Mammary epithelial cell (primary cell): ENCODE measurements at regions of chr2 and their contacts with region 1.

Region 1: DNA sequence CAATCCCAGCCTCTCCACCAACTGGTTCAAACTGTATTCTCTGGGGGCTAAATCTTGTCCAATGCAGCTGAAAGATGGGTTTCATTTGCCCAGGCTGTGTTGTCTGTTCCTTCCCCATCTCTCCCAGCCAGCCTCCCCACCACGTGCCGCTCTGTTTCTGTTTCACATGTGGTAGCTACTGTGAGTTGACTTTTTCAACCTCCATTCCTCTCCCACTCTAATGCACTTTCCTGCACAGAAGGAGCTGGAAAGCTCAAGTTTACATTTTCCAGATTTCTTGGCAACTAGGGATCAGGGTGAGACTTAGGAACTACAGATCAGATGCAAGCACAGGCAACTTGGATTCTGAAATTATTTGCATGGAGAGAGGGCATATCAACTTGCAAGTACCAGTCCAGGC is 19.0 kb upstream of the NPAS2 start:
- DNase-seq: no peak
- H3K4me3 ChIP-seq: no peak overlapping the region
- H3K27ac ChIP-seq: peak overlapping the region; percentile 95
- H3K4me1 ChIP-seq: peaks cover 36% of the 10 kb centered on the region
- H3K27me3 ChIP-seq: no peaks in the 10 kb centered on the region
- CTCF ChIP-seq: no peak

Region 2: DNA sequence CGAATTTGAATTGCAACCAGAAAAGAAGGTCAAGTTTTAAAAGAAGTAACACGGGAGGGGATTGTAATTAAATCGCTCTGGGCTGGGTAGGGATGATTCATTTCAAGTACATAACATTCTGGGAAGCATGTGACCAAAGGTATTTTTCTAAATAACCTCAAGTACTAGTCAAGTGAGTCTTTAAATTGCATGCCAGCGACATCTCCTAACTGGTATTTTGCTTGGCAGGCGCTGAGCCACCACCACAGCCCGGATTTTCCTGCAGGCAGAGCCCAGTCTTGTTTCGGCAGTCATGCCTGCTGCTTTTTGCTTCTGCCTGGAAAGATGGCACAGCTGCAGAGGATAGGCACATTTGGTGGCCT is 14.6 kb before region 1 on chr2:
- CTCF ChIA-PET with region 1: no interaction called
- dilution Hi-C with region 1: no loop called
- in situ Hi-C with region 1: no loop called
- intact Hi-C with region 1: loop called (anchors 2 kb)
- DNase-seq: peak; percentile 95
- H3K4me3 ChIP-seq: peak overlapping the region in 2 of 3 experiments; percentile 11 to 19
- H3K27ac ChIP-seq: peak overlapping the region; percentile 92
- H3K4me1 ChIP-seq: peaks cover 46% of the 10 kb centered on the region
- H3K27me3 ChIP-seq: no peaks in the 10 kb centered on the region
- CTCF ChIP-seq: no peak